ENCODE measurements at regions of chr13 and their contacts with region 1.

Region 1: DNA sequence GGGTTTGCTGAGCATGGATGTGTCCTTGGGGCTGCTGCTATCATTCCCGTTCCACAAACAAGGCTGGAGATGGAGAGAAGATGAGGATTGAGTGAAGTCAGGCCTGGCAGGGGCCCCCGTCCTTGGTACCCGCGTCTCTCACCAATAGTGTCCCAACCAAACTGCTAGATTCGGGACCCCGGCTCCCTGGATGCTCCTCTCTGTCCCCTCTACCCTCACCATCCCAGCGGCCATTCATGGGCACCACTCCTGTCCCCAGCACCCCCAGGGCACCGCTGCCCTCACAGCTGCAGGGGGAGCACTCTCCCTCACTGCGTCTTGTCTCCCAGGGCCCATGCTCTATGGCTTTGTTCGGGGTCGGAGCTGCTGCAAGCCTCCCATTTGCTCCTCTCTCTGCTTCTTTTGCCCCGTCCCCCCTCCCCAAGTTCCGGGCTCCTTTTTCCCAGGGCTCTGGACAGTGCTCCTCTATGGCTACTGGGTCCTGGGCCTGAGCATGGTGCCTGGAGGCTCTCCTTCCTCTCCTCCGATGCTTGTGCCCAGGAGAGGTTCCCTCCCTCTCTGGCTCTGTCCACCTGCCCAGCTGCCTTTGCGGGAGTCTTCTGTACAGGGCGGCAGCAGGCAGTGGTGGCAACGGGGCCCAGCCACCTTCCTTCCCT is 219.5 kb downstream of the TEX29 start:
- DNase-seq: no peak

Region 2: DNA sequence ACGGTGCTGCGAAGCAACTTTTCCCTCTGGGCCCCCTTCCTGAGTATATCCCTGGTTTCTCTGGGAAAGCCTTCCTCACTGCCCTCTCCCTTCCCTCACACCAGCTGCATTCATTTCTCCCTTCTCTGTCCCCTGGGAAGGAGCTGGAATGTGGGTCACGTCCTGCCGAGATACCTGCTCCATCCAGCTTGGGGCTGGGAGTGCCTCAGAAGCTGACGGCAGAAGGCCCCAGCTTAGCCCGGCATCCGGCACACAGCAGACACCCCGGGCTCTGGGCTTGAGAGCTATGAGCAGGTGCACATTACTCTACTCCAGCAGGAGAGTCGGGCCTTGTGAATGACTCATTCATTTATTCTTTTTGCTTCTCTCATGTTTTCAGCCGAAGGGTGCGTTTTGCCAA is 48.9 kb before region 1 on chr13:
- in situ Hi-C with region 1: no loop called
- DNase-seq: no peak

Region 3: GRCh38 chr13:111584101-111584672 is 44.3 kb after region 1 on chr13:
- in situ Hi-C with region 1: loop called (anchors 5 kb)
- DNase-seq: no peak

Measured in G401 (cell line).